Breast epithelium (tissue), 4 donors: ENCODE measurements at regions of chr5 and their contacts with region 1.

Region 1: GRCh38 chr5:152505442-152506042 is 100.5 kb upstream of the NMUR2 start:
- DNase-seq: no peak
- H3K4me3 ChIP-seq: no peak overlapping the region
- H3K27ac ChIP-seq: no peak overlapping the region
- H3K4me1 ChIP-seq: no peaks in the 10 kb centered on the region
- H3K27me3 ChIP-seq: peaks cover 0 to 8% of the 10 kb centered on the region in 2 donors
- CTCF ChIP-seq: peak; percentile 42 to 51 (median 44)
- POLR2A ChIP-seq: no peak

Region 2: DNA sequence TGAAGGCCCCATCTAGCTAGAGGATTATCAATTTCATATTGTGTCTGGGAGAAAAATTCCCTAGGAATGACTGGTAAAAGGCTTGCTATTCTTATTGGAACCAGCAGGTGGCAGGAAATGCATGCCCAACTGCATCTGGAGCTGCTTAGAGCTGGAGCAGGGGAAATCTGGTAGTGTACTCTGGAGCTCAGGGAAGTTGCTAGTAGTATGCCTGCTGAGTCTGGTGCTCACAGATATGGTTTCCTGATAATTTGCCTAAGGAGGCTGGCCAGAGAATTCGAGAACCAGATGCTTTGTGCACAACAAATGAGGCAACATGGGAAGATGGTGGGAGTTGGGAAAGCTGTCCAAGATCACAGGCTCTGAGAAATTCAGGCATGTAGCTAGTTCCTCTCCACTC is 680.1 kb before region 1 on chr5:
- intact Hi-C with region 1: loop called (anchors 10 kb)
- DNase-seq: peak in 1 of 2 donors; percentile 35
- H3K4me3 ChIP-seq: no peak overlapping the region
- H3K27ac ChIP-seq: no peak overlapping the region
- H3K4me1 ChIP-seq: no peaks in the 10 kb centered on the region
- H3K27me3 ChIP-seq: no peaks in the 10 kb centered on the region
- CTCF ChIP-seq: peak; percentile 74 to 84 (median 79)
- POLR2A ChIP-seq: no peak

Region 3: DNA sequence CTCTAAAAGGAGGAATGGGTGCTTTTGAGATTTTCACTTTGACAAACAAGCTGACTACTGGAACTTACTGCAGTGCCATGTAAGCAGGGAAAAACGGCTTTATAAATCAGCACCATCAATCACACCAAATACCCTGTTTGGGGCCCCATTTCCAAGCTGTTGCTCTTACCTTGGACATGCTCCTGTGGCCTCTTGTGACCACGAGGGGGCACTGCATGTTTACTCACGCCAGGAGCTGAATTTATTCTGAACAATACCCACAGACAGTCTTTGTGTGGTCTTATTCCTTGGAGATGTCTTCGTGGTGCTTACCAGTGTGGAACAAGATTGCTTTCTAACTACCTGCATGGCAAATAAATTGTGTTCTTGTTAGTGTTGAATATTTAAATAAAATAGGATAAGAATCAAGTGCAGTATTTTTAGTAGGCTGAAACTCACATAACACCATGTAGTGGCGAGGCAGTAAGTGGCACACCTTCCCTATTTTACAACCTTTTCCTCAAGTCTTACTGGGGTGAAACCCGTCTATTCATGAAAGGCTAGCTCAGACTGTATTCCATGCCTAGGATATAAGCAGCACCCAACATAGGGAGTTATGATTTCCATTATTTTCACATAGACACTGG is 55.1 kb after region 1 on chr5:
- intact Hi-C with region 1: loop called (anchors 2 kb)
- DNase-seq: no peak
- H3K4me3 ChIP-seq: no peak overlapping the region
- H3K27ac ChIP-seq: no peak overlapping the region
- H3K4me1 ChIP-seq: no peaks in the 10 kb centered on the region
- H3K27me3 ChIP-seq: no peaks in the 10 kb centered on the region
- CTCF ChIP-seq: peak in 2 of 3 donors; percentile 31 to 46
- POLR2A ChIP-seq: no peak

Region 4: GRCh38 chr5:152572812-152573211 is 67.3 kb after region 1 on chr5:
- intact Hi-C with region 1: no loop called
- DNase-seq: no peak
- H3K4me3 ChIP-seq: no peak overlapping the region
- H3K27ac ChIP-seq: no peak overlapping the region
- H3K4me1 ChIP-seq: no peaks in the 10 kb centered on the region
- H3K27me3 ChIP-seq: no peaks in the 10 kb centered on the region
- CTCF ChIP-seq: no peak
- POLR2A ChIP-seq: no peak